Motor neuron (in vitro differentiated cells): ENCODE measurements at regions of chr3 and their contacts with region 1.

Region 1: GRCh38 chr3:33915791-33916546 is 117.5 kb downstream of the PDCD6IP start:
- ATAC-seq: peak; percentile 44 to 82 (median 63)
- H3K4me3 ChIP-seq: no peak overlapping the region
- H3K27ac ChIP-seq: no peak overlapping the region
- H3K4me1 ChIP-seq: peaks cover 6 to 24% of the 10 kb centered on the region in 2 donors

Region 2: DNA sequence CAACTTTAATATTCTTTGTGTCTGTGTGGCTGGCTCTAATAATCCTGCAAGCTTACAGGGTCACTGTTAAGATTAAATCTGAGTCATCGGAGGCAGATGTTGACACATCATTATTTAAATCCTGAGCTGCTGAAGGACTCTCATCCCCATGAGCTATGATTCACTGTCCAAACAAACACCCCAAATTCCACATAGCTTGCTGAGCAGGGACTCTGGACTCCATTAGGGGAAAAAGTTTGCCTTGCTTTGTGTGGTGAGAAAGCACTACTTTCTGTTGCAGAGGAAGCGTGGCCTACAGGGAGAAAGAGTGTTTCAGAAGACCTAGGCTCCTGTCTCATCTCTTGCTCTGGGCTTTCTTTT is 96.1 kb after region 1 on chr3:
- in situ Hi-C with region 1: loop called in 1 of 9 experiments (anchors 25 kb)
- ATAC-seq: peak; percentile 62 to 91 (median 70)
- H3K4me3 ChIP-seq: no peak overlapping the region
- H3K27ac ChIP-seq: no peak overlapping the region
- H3K4me1 ChIP-seq: peaks cover 6% of the 10 kb centered on the region in 2 donors

Region 3: GRCh38 chr3:34260271-34261006 is 344.5 kb after region 1 on chr3:
- in situ Hi-C with region 1: loop called in 1 of 9 experiments (anchors 25 kb)
- ATAC-seq: peak; percentile 43 to 73 (median 54)
- H3K4me3 ChIP-seq: no peak overlapping the region
- H3K27ac ChIP-seq: no peak overlapping the region
- H3K4me1 ChIP-seq: peaks cover 15 to 38% of the 10 kb centered on the region in 2 donors